Naive thymus-derived CD4-positive, alpha-beta T cell (primary cell): ENCODE measurements at regions of chr2 and their contacts with region 1.

Region 1: GRCh38 chr2:12127638-12128037 is 381.2 kb downstream of the LPIN1 start:
- DNase-seq: peak in 6 of 9 donors; percentile 40 to 63 (median 56)
- ATAC-seq: peak; percentile 80
- H3K4me3 ChIP-seq: peak overlapping the region; percentile 10
- H3K4me3 Mint-ChIP-seq: peak overlapping the region in 5 of 10 donors; percentile 34 to 90 (median 73)
- H3K27ac ChIP-seq: peak overlapping the region; percentile 63
- H3K27ac Mint-ChIP-seq: peak overlapping the region in 3 of 9 donors; percentile 84 to 95 (median 87)
- H3K4me1 ChIP-seq: peaks cover 22 to 61% of the 10 kb centered on the region in 2 donors
- H3K4me1 Mint-ChIP-seq: peaks cover 0 to 22% (median 0%) of the 10 kb centered on the region in 7 donors
- H3K27me3 ChIP-seq: no peaks in the 10 kb centered on the region
- H3K27me3 Mint-ChIP-seq: no peaks in the 10 kb centered on the region

Region 2: DNA sequence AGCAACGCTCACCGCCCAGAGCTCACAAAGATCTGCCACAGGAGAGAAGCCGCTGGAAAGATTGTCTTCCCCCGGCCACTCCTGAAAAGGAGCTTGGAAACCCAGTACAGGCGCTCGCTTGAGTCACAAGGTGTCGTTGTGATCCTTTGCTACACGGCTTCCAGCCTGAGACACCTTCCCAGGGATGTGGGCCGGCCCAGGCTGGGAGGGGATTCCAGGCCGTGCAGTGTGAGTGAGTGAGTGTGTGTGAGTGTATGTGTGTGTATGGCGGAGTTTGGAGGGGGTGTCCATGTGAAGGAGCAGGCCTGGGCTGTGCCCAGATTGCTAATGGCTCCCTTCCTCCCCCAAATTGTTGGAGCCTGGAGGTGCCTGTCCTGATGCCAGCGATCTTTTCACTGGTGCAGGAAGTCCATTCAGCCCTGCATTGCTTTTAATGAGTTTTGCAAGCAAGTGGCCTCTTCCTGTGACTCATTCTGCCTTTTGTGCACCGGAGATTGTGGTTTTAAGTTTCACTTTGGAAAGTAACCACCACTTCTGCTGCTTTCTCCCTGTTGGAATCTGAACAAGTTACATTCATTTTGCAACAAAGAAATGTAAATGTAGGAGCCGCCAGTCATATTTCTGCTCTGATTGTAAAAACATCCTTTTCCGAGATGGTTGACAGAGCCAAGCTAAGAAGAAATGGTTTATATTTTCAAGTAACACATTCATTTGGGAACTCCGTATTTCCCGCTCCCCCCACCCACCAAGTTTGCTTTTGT is 297.5 kb before region 1 on chr2:
- CTCF ChIA-PET with region 1: no interaction called
- POLR2A ChIA-PET with region 1: no interaction called
- intact Hi-C with region 1: loop called in 1 of 2 experiments (anchors 1 kb)
- DNase-seq: peak in 8 of 9 donors; percentile 53 to 73 (median 63)
- ATAC-seq: peak; percentile 86
- H3K4me3 ChIP-seq: peak overlapping the region; percentile 60
- H3K4me3 Mint-ChIP-seq: peak overlapping the region; percentile 80 to 97 (median 84)
- H3K27ac ChIP-seq: peak overlapping the region; percentile 46
- H3K27ac Mint-ChIP-seq: peak overlapping the region; percentile 21 to 87 (median 78)
- H3K4me1 ChIP-seq: peaks cover 20% of the 10 kb centered on the region in 2 donors
- H3K4me1 Mint-ChIP-seq: peaks cover 18 to 44% (median 33%) of the 10 kb centered on the region in 7 donors
- H3K27me3 ChIP-seq: no peaks in the 10 kb centered on the region
- H3K27me3 Mint-ChIP-seq: peaks cover 0 to 50% (median 0%) of the 10 kb centered on the region in 5 donors

Region 3: GRCh38 chr2:12081481-12082210 is 46.0 kb before region 1 on chr2:
- CTCF ChIA-PET with region 1: no interaction called
- POLR2A ChIA-PET with region 1: no interaction called
- intact Hi-C with region 1: loop called in 1 of 2 experiments (anchors 5 kb)
- DNase-seq: peak in 7 of 9 donors; percentile 51 to 83 (median 73)
- ATAC-seq: peak; percentile 93
- H3K4me3 ChIP-seq: no peak overlapping the region
- H3K4me3 Mint-ChIP-seq: peak overlapping the region in 6 of 10 donors; percentile 16 to 63 (median 42)
- H3K27ac ChIP-seq: no peak overlapping the region
- H3K27ac Mint-ChIP-seq: peak overlapping the region in 8 of 9 donors; percentile 46 to 93 (median 84)
- H3K4me1 ChIP-seq: peaks cover 6 to 12% of the 10 kb centered on the region in 2 donors
- H3K4me1 Mint-ChIP-seq: peaks cover 2 to 43% (median 32%) of the 10 kb centered on the region in 7 donors
- H3K27me3 ChIP-seq: no peaks in the 10 kb centered on the region
- H3K27me3 Mint-ChIP-seq: peaks cover 0 to 12% (median 0%) of the 10 kb centered on the region in 5 donors

Region 4: GRCh38 chr2:12116228-12116750 is 11.3 kb before region 1 on chr2:
- CTCF ChIA-PET with region 1: interaction called, 4 read pairs
- POLR2A ChIA-PET with region 1: interaction called, 10 read pairs
- intact Hi-C with region 1: no loop called
- DNase-seq: no peak
- ATAC-seq: no peak
- H3K4me3 ChIP-seq: no peak overlapping the region
- H3K4me3 Mint-ChIP-seq: no peak overlapping the region
- H3K27ac ChIP-seq: no peak overlapping the region
- H3K27ac Mint-ChIP-seq: no peak overlapping the region
- H3K4me1 ChIP-seq: peaks cover 0 to 2% of the 10 kb centered on the region in 2 donors
- H3K4me1 Mint-ChIP-seq: peaks cover under 1 to 34% (median 27%) of the 10 kb centered on the region in 7 donors
- H3K27me3 ChIP-seq: no peaks in the 10 kb centered on the region
- H3K27me3 Mint-ChIP-seq: peaks cover 0 to 5% (median 0%) of the 10 kb centered on the region in 5 donors

Region 5: GRCh38 chr2:12262681-12263436 is 135.2 kb after region 1 on chr2:
- CTCF ChIA-PET with region 1: interaction called, 4 read pairs
- POLR2A ChIA-PET with region 1: no interaction called
- intact Hi-C with region 1: loop called in 1 of 2 experiments (anchors 5 kb)
- DNase-seq: peak in 3 of 9 donors; percentile 8 to 43 (median 25)
- ATAC-seq: peak; percentile 50
- H3K4me3 ChIP-seq: no peak overlapping the region
- H3K4me3 Mint-ChIP-seq: peak overlapping the region in 2 of 10 donors; percentile 12 to 36
- H3K27ac ChIP-seq: no peak overlapping the region
- H3K27ac Mint-ChIP-seq: peak overlapping the region in 7 of 9 donors; percentile 7 to 83 (median 36)
- H3K4me1 ChIP-seq: peaks cover 0 to 30% of the 10 kb centered on the region in 2 donors
- H3K4me1 Mint-ChIP-seq: peaks cover 9 to 55% (median 47%) of the 10 kb centered on the region in 7 donors
- H3K27me3 ChIP-seq: no peaks in the 10 kb centered on the region
- H3K27me3 Mint-ChIP-seq: peaks cover 0 to 10% (median 0%) of the 10 kb centered on the region in 5 donors

Region 6: GRCh38 chr2:13652531-13653313 is 1525.1 kb after region 1 on chr2:
- CTCF ChIA-PET with region 1: no interaction called
- POLR2A ChIA-PET with region 1: no interaction called
- intact Hi-C with region 1: no loop called
- DNase-seq: no peak
- ATAC-seq: no peak
- H3K4me3 ChIP-seq: no peak overlapping the region
- H3K4me3 Mint-ChIP-seq: no peak overlapping the region
- H3K27ac ChIP-seq: no peak overlapping the region
- H3K27ac Mint-ChIP-seq: no peak overlapping the region
- H3K4me1 ChIP-seq: no peaks in the 10 kb centered on the region
- H3K4me1 Mint-ChIP-seq: no peaks in the 10 kb centered on the region
- H3K27me3 ChIP-seq: no peaks in the 10 kb centered on the region
- H3K27me3 Mint-ChIP-seq: no peaks in the 10 kb centered on the region